ENCODE measurements at regions of chrX and their contacts with region 1.

Region 1: DNA sequence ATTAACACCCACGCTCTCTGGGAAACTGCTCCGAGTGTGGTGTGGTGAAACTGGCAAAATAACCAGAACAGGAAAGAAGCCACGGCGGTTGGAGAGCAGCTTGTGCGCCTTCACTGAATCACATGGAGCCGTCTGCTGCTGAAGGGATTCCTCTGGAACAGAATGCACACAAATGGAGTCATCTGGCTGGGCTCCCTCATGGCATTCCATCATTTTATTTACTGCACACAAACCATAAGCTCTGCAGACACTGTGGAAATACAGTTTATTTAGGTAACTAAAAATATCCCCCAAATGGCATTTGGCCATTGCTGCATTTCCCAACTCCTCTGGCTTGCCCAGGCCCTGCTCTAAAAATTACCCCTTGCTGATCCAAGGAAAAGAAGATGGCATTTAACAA is 187.0 kb upstream of the S100G start:
- DNase-seq: no peak
- ATAC-seq: no peak
- H3K4me3 ChIP-seq: no peak overlapping the region
- H3K27ac ChIP-seq: no peak overlapping the region
- H3K4me1 ChIP-seq: no peaks in the 10 kb centered on the region
- H3K27me3 ChIP-seq: no peaks in the 10 kb centered on the region
- CTCF ChIP-seq: no peak
- EP300 ChIP-seq: no peak
- POLR2A ChIP-seq: no peak
- RAD21 ChIP-seq: no peak

Region 2: DNA sequence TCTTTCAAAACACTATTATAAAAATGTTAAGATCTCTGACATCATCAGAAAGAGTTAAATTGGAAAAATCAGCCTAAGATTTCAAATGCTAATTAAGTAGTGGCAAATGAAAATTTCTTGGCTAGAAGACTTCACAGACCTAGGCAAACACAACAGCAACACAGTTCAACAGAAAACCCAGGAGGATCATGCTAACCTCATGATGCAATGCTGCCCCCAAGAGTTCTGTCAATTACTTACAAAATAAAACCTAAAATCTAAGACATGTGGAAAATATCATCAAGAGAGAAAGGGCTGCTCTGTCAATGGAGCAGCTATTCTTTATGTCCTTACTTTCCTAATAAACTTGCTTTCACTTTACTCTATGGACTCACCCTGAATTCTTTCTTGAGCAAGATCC is 208.1 kb after region 1 on chrX:
- CTCF ChIA-PET with region 1: no interaction called
- POLR2A ChIA-PET with region 1: no interaction called
- in situ Hi-C with region 1: loop called (anchors 25 kb)
- intact Hi-C with region 1: no loop called
- DNase-seq: peak; percentile 5
- ATAC-seq: no peak
- H3K4me3 ChIP-seq: no peak overlapping the region
- H3K27ac ChIP-seq: no peak overlapping the region
- H3K4me1 ChIP-seq: no peaks in the 10 kb centered on the region
- H3K27me3 ChIP-seq: no peaks in the 10 kb centered on the region
- CTCF ChIP-seq: peak; percentile 53
- EP300 ChIP-seq: no peak
- POLR2A ChIP-seq: no peak
- RAD21 ChIP-seq: no peak

Region 3: DNA sequence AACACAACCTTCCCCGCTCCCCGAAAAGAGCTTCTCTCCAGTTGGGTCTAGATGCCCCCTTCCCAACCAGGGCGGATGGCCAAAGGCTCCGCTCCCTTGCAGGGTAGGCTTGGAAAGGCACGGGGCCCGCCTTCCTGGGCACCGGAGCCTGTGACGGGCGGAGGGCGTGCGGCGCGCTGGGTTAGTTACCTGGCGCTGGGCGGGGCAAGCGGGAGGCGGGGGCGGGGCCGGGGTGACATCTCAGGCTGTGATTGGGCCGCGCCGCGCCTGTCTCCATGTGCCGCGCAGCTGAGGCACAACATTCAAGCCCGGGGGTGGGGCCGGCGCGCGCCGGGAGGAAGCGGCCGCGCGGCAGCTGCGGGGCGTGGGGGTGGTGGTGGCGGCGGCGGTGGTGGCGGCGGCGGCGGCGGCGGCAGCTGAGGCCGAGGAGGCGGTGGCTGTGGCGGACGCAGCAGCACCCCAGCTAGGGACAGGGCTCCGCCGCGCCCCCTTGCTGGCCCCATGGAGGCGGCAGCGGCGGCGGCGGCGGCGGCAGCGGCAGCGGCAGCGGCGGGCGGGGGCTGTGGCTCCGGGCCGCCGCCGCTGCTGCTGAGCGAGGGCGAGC is 483.6 kb after region 1 on chrX and contains the start of gene REPS2:
- CTCF ChIA-PET with region 1: no interaction called
- POLR2A ChIA-PET with region 1: no interaction called
- in situ Hi-C with region 1: no loop called
- intact Hi-C with region 1: no loop called
- DNase-seq: peak; percentile 41
- ATAC-seq: peak; percentile 98
- H3K4me3 ChIP-seq: peak within 1 kb of the TSS; percentile 47 to 66 (median 55)
- H3K27ac ChIP-seq: no peak within 1 kb of the TSS
- H3K4me1 ChIP-seq: peaks cover 5% of the 10 kb centered on the region; the same call in 1 of the 2 replicates
- H3K27me3 ChIP-seq: 0 out of 5 replicates have a peak, but pooled peaks cover 0 to 4% of the 10 kb centered on the region in 2 experiments
- CTCF ChIP-seq: no peak
- EP300 ChIP-seq: no peak
- POLR2A ChIP-seq: no peak
- RAD21 ChIP-seq: no peak
- total RNA-seq, gene REPS2: 0.58 and 0.84 TPM in 2 replicates

Region 4: GRCh38 chrX:17266127-17266526 is 803.2 kb after region 1 on chrX:
- CTCF ChIA-PET with region 1: no interaction called
- POLR2A ChIA-PET with region 1: no interaction called
- in situ Hi-C with region 1: no loop called
- intact Hi-C with region 1: no loop called
- DNase-seq: no peak
- ATAC-seq: no peak
- H3K4me3 ChIP-seq: no peak overlapping the region
- H3K27ac ChIP-seq: no peak overlapping the region
- H3K4me1 ChIP-seq: no peaks in the 10 kb centered on the region
- H3K27me3 ChIP-seq: no peaks in the 10 kb centered on the region
- CTCF ChIP-seq: no peak
- EP300 ChIP-seq: no peak
- POLR2A ChIP-seq: no peak
- RAD21 ChIP-seq: no peak

Measured in HepG2 (cell line).